Transverse colon (tissue), 4 donors: ENCODE measurements at regions of chr4 and their contacts with region 1.

Region 1: DNA sequence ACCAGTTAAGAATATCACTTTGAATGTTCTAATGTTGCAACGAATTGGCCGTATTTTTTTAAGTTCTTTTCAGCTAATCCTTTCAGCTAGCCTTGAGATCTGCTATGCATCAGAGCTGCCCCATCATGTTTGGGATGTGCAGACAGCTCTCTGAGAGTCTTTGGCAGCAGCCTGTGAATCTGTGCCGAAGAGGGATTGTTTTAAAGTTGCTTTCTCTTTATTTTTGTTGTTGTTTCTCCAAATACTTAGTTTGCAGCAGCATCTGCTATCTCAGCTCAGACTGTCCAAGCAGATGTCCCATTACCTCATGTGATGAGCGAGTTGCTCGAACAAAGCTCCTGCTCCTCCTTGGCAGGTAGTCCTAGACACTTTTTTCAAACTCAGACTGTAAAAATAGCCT is 1002.5 kb upstream of the INTU start:
- DNase-seq: no peak
- H3K4me3 ChIP-seq: no peak overlapping the region
- H3K27ac ChIP-seq: no peak overlapping the region
- H3K4me1 ChIP-seq: no peaks in the 10 kb centered on the region
- H3K27me3 ChIP-seq: no peaks in the 10 kb centered on the region
- CTCF ChIP-seq: no peak
- EP300 ChIP-seq: no peak
- POLR2A ChIP-seq: no peak

Region 2: GRCh38 chr4:124863107-124863506 is 1767.1 kb before region 1 on chr4:
- in situ Hi-C with region 1: no loop called
- intact Hi-C with region 1: loop called (anchors 10 kb)
- DNase-seq: no peak
- H3K4me3 ChIP-seq: no peak overlapping the region
- H3K27ac ChIP-seq: no peak overlapping the region
- H3K4me1 ChIP-seq: no peaks in the 10 kb centered on the region
- H3K27me3 ChIP-seq: no peaks in the 10 kb centered on the region
- CTCF ChIP-seq: no peak
- EP300 ChIP-seq: no peak
- POLR2A ChIP-seq: no peak

Region 3: GRCh38 chr4:126678618-126679017 is 48.4 kb after region 1 on chr4:
- in situ Hi-C with region 1: no loop called
- intact Hi-C with region 1: no loop called
- DNase-seq: no peak
- H3K4me3 ChIP-seq: no peak overlapping the region
- H3K27ac ChIP-seq: no peak overlapping the region
- H3K4me1 ChIP-seq: no peaks in the 10 kb centered on the region
- H3K27me3 ChIP-seq: no peaks in the 10 kb centered on the region
- CTCF ChIP-seq: no peak
- EP300 ChIP-seq: no peak
- POLR2A ChIP-seq: no peak

Region 4: GRCh38 chr4:126986828-126987227 is 356.6 kb after region 1 on chr4:
- in situ Hi-C with region 1: no loop called
- intact Hi-C with region 1: no loop called
- DNase-seq: no peak
- H3K4me3 ChIP-seq: no peak overlapping the region
- H3K27ac ChIP-seq: no peak overlapping the region
- H3K4me1 ChIP-seq: no peaks in the 10 kb centered on the region
- H3K27me3 ChIP-seq: no peaks in the 10 kb centered on the region
- CTCF ChIP-seq: no peak
- EP300 ChIP-seq: no peak
- POLR2A ChIP-seq: no peak